ENCODE measurements at regions of chr4 and their contacts with region 1.

Region 1: GRCh38 chr4:109406338-109406931 is 27.2 kb upstream of the SEC24B start:
- DNase-seq: peak; percentile 28
- ATAC-seq: no peak
- H3K4me3 ChIP-seq: no peak overlapping the region
- H3K27ac ChIP-seq: no peak overlapping the region
- H3K4me1 ChIP-seq: no peaks in the 10 kb centered on the region
- H3K27me3 ChIP-seq: no peaks in the 10 kb centered on the region
- CTCF ChIP-seq: peak; percentile 57; the same call in 1 of the 2 replicates

Region 2: GRCh38 chr4:108683479-108683878 is 723.0 kb before region 1 on chr4:
- CTCF ChIA-PET with region 1: no interaction called
- POLR2A ChIA-PET with region 1: no interaction called
- in situ Hi-C with region 1: no loop called
- intact Hi-C with region 1: loop called (anchors 5 kb)
- DNase-seq: peak; percentile 8
- ATAC-seq: peak; percentile 74; the same call in 1 of the 2 replicates
- H3K4me3 ChIP-seq: no peak overlapping the region
- H3K27ac ChIP-seq: no peak overlapping the region
- H3K4me1 ChIP-seq: no peaks in the 10 kb centered on the region
- H3K27me3 ChIP-seq: no peaks in the 10 kb centered on the region
- CTCF ChIP-seq: peak; percentile 45; the same call in 1 of the 2 replicates

Region 3: GRCh38 chr4:108834835-108835384 is 571.5 kb before region 1 on chr4:
- CTCF ChIA-PET with region 1: no interaction called
- POLR2A ChIA-PET with region 1: no interaction called
- in situ Hi-C with region 1: no loop called
- intact Hi-C with region 1: loop called (anchors 2 kb)
- DNase-seq: no peak
- ATAC-seq: no peak
- H3K4me3 ChIP-seq: no peak overlapping the region
- H3K27ac ChIP-seq: no peak overlapping the region
- H3K4me1 ChIP-seq: no peaks in the 10 kb centered on the region
- H3K27me3 ChIP-seq: no peaks in the 10 kb centered on the region
- CTCF ChIP-seq: peak; percentile 57; the same call in 1 of the 2 replicates

Region 4: DNA sequence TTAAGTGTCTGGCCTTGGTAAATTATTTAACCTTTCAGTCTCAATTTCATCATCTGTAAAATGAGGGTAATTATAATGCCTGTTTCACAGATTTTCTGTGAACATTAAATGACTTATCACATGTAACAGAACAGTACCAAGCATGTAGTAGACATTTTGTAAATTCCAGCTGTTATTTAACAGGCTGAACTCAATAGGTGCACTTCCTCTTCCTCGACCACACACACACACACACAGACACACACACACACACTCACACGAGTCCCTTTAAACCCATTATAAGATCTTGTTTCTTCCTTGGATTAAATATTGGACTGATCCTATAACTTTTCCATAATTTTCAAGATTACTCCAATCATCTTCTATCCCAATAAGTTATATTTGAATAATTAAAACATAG is 50.6 kb before region 1 on chr4:
- CTCF ChIA-PET with region 1: no interaction called
- POLR2A ChIA-PET with region 1: no interaction called
- in situ Hi-C with region 1: no loop called
- intact Hi-C with region 1: no loop called
- DNase-seq: no peak
- ATAC-seq: no peak
- H3K4me3 ChIP-seq: no peak overlapping the region
- H3K27ac ChIP-seq: no peak overlapping the region
- H3K4me1 ChIP-seq: no peaks in the 10 kb centered on the region
- H3K27me3 ChIP-seq: no peaks in the 10 kb centered on the region
- CTCF ChIP-seq: no peak

Region 5: GRCh38 chr4:109648266-109648996 is 242.0 kb after region 1 on chr4:
- CTCF ChIA-PET with region 1: no interaction called
- POLR2A ChIA-PET with region 1: no interaction called
- in situ Hi-C with region 1: no loop called
- intact Hi-C with region 1: no loop called
- DNase-seq: no peak
- ATAC-seq: no peak
- H3K4me3 ChIP-seq: no peak overlapping the region
- H3K27ac ChIP-seq: no peak overlapping the region
- H3K4me1 ChIP-seq: no peaks in the 10 kb centered on the region
- H3K27me3 ChIP-seq: no peaks in the 10 kb centered on the region
- CTCF ChIP-seq: no peak

Measured in Panc1 (cell line).